Breast epithelium (tissue), 4 donors: ENCODE measurements at regions of chr5 and their contacts with region 1.

Region 1: DNA sequence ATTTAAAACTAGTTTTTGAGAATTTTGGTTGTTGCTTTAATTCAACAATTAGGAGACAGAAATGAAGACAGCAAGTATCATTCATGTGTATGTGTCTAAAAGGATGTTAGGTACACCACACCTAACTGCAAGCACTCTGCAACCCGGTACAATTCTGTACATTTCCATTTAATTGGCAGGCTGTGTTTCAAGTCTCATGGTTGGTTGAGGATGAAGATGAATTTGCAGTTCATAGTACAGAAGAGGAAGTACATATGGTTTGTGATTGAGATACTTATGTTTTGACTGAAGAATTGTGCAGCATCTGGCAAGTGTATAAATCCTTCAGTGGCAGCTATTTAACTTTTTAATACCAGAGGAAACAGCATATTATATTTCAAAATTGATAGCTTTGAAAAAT is 628.7 kb upstream of the ZNF608 start:
- DNase-seq: no peak
- H3K4me3 ChIP-seq: no peak overlapping the region
- H3K27ac ChIP-seq: no peak overlapping the region
- H3K4me1 ChIP-seq: no peaks in the 10 kb centered on the region
- H3K27me3 ChIP-seq: no peaks in the 10 kb centered on the region
- CTCF ChIP-seq: no peak
- POLR2A ChIP-seq: no peak

Region 2: DNA sequence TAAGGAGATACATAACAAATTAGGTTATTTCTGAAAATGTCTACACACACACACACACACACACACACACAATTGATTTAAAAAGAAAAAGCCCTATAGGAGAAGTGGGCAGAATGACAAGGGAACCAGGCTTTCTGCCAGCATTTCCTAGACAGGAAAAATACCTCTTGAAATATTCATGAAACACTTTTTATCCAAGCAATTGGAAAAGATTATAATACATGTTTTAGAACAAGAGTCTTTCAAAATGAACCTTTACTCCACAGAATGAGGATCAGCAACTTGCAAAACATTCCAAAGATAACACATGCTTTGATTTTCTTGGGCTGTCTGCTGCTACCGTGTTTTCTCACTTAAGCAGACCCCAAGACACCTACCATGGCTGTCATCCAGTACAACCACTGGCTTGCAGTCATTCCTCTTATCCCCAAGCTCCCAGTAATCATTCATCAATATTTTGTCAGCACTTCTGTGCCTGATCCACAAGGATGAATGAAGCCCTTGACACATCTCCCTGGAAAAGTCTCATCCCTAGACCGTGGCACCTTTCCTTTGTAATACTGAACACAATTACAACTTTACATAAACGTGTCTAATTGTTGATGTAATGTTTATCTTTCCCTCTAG is 88.4 kb after region 1 on chr5:
- intact Hi-C with region 1: loop called (anchors 5 kb)
- DNase-seq: no peak
- H3K4me3 ChIP-seq: no peak overlapping the region
- H3K27ac ChIP-seq: no peak overlapping the region
- H3K4me1 ChIP-seq: no peaks in the 10 kb centered on the region
- H3K27me3 ChIP-seq: no peaks in the 10 kb centered on the region
- CTCF ChIP-seq: no peak
- POLR2A ChIP-seq: no peak